Right cardiac atrium (tissue), 5 donors: ENCODE measurements at regions of chr7 and their contacts with region 1.

Region 1: GRCh38 chr7:31122649-31123058 is 70.5 kb downstream of the ADCYAP1R1 start:
- DNase-seq: peak; percentile 65 to 82 (median 69)
- ATAC-seq: peak; percentile 77 to 86
- H3K4me3 ChIP-seq: no peak overlapping the region
- H3K27ac ChIP-seq: no peak overlapping the region
- H3K4me1 ChIP-seq: no peaks in the 10 kb centered on the region
- H3K27me3 ChIP-seq: no peaks in the 10 kb centered on the region

Region 2: GRCh38 chr7:30983042-30983913 is 139.4 kb before region 1 on chr7:
- intact Hi-C with region 1: loop called (anchors 1 to 2 kb)
- DNase-seq: peak; percentile 84 to 95 (median 92)
- ATAC-seq: peak; percentile 77 to 91
- H3K4me3 ChIP-seq: no peak overlapping the region
- H3K27ac ChIP-seq: no peak overlapping the region
- H3K4me1 ChIP-seq: no peaks in the 10 kb centered on the region
- H3K27me3 ChIP-seq: no peaks in the 10 kb centered on the region